H1 (cell line): ENCODE measurements at regions of chr3 and their contacts with region 1.

Region 1: GRCh38 chr3:81338676-81339555 is 422.5 kb downstream of the GBE1 start:
- DNase-seq: no peak
- H3K4me3 ChIP-seq: no peak overlapping the region
- H3K27ac ChIP-seq: no peak overlapping the region
- H3K4me1 ChIP-seq: no peaks in the 10 kb centered on the region
- H3K27me3 ChIP-seq: no peaks in the 10 kb centered on the region
- CTCF ChIP-seq: peak in 2 of 3 experiments; percentile 29 to 44; a peak in 2 of 4 replicates
- EP300 ChIP-seq: no peak
- POLR2A ChIP-seq: no peak
- RAD21 ChIP-seq: peak; percentile 46 to 55

Region 2: DNA sequence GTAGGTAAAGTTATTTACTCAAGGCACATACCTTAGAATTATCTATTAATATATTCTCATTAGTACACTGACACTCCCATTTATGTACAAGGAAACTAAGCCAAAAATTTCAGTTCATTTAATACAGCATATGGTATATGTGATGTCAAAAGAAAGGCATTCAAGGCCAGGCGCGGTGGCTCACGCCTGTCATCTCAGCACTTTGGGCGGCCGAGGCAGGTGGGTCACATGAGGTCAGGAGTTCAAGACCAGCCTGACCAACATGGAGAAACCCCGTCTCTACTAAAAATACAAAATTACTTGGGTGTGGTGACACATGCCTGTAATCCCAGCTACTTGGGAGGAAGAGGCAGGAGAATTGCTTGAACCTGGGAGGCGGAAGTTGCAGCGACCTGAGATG is 12.7 kb before region 1 on chr3:
- CTCF ChIA-PET with region 1: interaction called, 16 read pairs
- POLR2A ChIA-PET with region 1: no interaction called
- DNase-seq: no peak
- H3K4me3 ChIP-seq: no peak overlapping the region
- H3K27ac ChIP-seq: no peak overlapping the region
- H3K4me1 ChIP-seq: no peaks in the 10 kb centered on the region
- H3K27me3 ChIP-seq: no peaks in the 10 kb centered on the region
- CTCF ChIP-seq: no peak
- EP300 ChIP-seq: no peak
- POLR2A ChIP-seq: no peak
- RAD21 ChIP-seq: no peak

Region 3: DNA sequence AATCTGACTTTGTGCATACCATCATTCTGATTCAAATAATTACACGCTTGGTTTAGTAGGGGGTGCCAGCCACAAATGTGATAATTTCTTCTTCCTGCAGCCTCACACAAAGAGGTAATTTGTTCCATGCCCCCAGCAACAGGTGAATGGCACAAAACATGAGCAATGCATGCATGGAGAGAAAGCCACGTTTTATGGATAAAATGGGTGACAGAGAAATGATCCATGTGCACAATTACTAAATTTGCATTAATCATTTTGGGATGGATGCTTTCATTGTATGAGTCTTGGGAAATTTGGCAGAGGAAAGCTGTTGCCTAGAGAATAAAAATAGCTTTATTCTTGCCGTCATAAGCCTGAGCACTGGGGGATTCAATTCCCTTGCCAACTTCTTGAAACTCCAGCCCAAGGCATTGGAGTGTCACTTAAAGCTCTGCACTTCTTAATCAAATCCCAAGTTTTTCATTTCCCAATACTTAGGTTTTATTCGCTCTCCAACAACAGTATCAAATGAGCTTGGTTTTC is 11.0 kb after region 1 on chr3:
- CTCF ChIA-PET with region 1: interaction called, 33 read pairs
- POLR2A ChIA-PET with region 1: no interaction called
- DNase-seq: no peak
- H3K4me3 ChIP-seq: no peak overlapping the region
- H3K27ac ChIP-seq: no peak overlapping the region
- H3K4me1 ChIP-seq: no peaks in the 10 kb centered on the region
- H3K27me3 ChIP-seq: no peaks in the 10 kb centered on the region
- CTCF ChIP-seq: no peak
- EP300 ChIP-seq: no peak
- POLR2A ChIP-seq: no peak
- RAD21 ChIP-seq: no peak

Region 4: GRCh38 chr3:81382470-81382869 is 43.6 kb after region 1 on chr3:
- CTCF ChIA-PET with region 1: no interaction called
- POLR2A ChIA-PET with region 1: no interaction called
- DNase-seq: no peak
- H3K4me3 ChIP-seq: no peak overlapping the region
- H3K27ac ChIP-seq: no peak overlapping the region
- H3K4me1 ChIP-seq: no peaks in the 10 kb centered on the region
- H3K27me3 ChIP-seq: no peaks in the 10 kb centered on the region
- CTCF ChIP-seq: no peak
- EP300 ChIP-seq: no peak
- POLR2A ChIP-seq: no peak
- RAD21 ChIP-seq: no peak